Posterior vena cava (tissue), 2 donors: ENCODE measurements at regions of chr2 and their contacts with region 1.

Region 1: GRCh38 chr2:242038166-242038927 is 168.8 kb downstream of the RTP5 start:
- DNase-seq: no peak

Region 2: GRCh38 chr2:241344925-241345651 is 693.3 kb before region 1 on chr2:
- intact Hi-C with region 1: no loop called
- DNase-seq: no peak

Region 3: DNA sequence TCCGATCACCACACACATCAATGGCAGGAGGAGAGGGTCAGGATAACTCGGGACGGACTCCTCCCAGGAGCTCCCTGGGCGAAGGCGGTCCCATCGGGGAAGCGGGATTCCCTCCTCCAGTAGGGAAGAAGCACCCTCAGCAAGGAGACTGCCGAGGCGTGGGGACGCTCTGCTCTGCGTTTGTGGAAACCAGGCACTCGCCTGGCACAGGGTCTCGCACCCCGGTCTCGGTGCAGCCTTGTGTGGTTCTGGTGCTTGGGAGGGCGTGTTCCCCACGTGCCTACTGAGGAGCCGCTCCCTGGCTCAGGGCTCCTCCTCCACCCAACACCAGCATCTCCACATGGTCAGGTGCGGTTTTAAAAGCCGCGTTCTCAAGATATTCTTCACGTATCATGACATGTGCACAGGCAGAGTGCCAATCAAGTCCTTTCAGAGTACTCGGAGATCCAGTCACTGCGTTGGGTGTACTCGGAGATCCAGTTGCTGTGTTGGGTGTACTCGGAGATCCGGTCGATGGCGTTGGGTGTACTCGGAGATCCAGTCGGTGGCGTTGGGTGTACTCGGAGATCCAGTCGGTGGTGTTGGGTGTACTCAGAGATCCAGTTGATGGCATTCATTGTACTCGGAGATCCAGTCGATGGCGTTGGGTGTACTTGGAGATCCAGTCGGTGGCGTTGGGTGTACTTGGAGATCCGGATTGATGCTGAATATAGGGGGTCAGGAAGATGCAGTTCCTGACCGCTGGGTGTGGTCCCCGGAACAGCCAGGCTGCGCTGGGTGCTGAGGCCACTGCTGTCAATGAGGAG is 51.3 kb before region 1 on chr2:
- intact Hi-C with region 1: no loop called
- DNase-seq: no peak

Region 4: GRCh38 chr2:242020196-242021004 is 17.9 kb before region 1 on chr2:
- intact Hi-C with region 1: loop called in 1 of 2 experiments (anchors 1 kb)
- DNase-seq: no peak